Mammary epithelial cell (primary cell): ENCODE measurements at regions of chr15 and their contacts with region 1.

Region 1: GRCh38 chr15:99928429-99928981 is 195.3 kb upstream of the LYSMD4 start:
- DNase-seq: peak; percentile 65
- H3K4me3 ChIP-seq: peak overlapping the region; percentile 30 to 69 (median 60)
- H3K27ac ChIP-seq: no peak overlapping the region
- H3K4me1 ChIP-seq: peaks cover 14% of the 10 kb centered on the region
- H3K27me3 ChIP-seq: no peaks in the 10 kb centered on the region
- CTCF ChIP-seq: peak; percentile 24 to 66

Region 2: GRCh38 chr15:99878835-99879234 is 49.7 kb before region 1 on chr15:
- CTCF ChIA-PET with region 1: no interaction called
- dilution Hi-C with region 1: no loop called
- in situ Hi-C with region 1: no loop called
- intact Hi-C with region 1: no loop called
- DNase-seq: no peak
- H3K4me3 ChIP-seq: no peak overlapping the region
- H3K27ac ChIP-seq: no peak overlapping the region
- H3K4me1 ChIP-seq: no peaks in the 10 kb centered on the region
- H3K27me3 ChIP-seq: peaks cover 3% of the 10 kb centered on the region
- CTCF ChIP-seq: no peak

Region 3: GRCh38 chr15:99981191-99981647 is 52.7 kb after region 1 on chr15:
- CTCF ChIA-PET with region 1: no interaction called
- dilution Hi-C with region 1: no loop called
- in situ Hi-C with region 1: no loop called
- intact Hi-C with region 1: loop called (anchors 5 kb)
- DNase-seq: peak; percentile 14
- H3K4me3 ChIP-seq: no peak overlapping the region
- H3K27ac ChIP-seq: no peak overlapping the region
- H3K4me1 ChIP-seq: peaks cover 10% of the 10 kb centered on the region
- H3K27me3 ChIP-seq: peaks cover 5% of the 10 kb centered on the region
- CTCF ChIP-seq: peak; percentile 5 to 45

Region 4: DNA sequence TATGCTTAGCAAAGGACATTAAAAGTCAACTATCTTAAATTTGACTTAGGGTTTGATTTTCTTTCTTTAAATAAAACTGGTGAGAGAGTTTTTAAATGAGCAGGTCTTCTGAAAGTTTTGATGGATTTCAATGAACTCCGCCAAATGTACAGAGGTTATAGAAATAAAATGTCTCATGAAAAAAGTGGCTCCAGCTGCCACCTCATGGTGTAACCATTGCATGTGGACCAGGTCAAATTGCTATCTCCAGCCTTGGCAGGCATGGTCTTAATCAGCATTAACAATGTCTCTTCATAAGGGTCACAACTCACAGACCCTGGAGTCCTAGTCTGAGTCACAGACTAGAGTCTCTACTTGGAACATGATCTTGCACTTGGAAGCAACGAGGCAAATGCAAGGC is 230.9 kb after region 1 on chr15:
- CTCF ChIA-PET with region 1: no interaction called
- dilution Hi-C with region 1: no loop called
- in situ Hi-C with region 1: no loop called
- intact Hi-C with region 1: loop called (anchors 2 kb)
- DNase-seq: no peak
- H3K4me3 ChIP-seq: no peak overlapping the region
- H3K27ac ChIP-seq: no peak overlapping the region
- H3K4me1 ChIP-seq: no peaks in the 10 kb centered on the region
- H3K27me3 ChIP-seq: no peaks in the 10 kb centered on the region
- CTCF ChIP-seq: peak in 1 of 2 donors; percentile 10

Region 5: GRCh38 chr15:100192097-100193080 is 263.9 kb after region 1 on chr15:
- CTCF ChIA-PET with region 1: no interaction called
- dilution Hi-C with region 1: no loop called
- in situ Hi-C with region 1: no loop called
- intact Hi-C with region 1: loop called (anchors 1 kb)
- DNase-seq: no peak
- H3K4me3 ChIP-seq: no peak overlapping the region
- H3K27ac ChIP-seq: no peak overlapping the region
- H3K4me1 ChIP-seq: no peaks in the 10 kb centered on the region
- H3K27me3 ChIP-seq: no peaks in the 10 kb centered on the region
- CTCF ChIP-seq: no peak

Region 6: GRCh38 chr15:100383302-100384107 is 455.0 kb after region 1 on chr15:
- CTCF ChIA-PET with region 1: no interaction called
- dilution Hi-C with region 1: no loop called
- in situ Hi-C with region 1: no loop called
- intact Hi-C with region 1: loop called (anchors 2 kb)
- DNase-seq: peak; percentile 23
- H3K4me3 ChIP-seq: no peak overlapping the region
- H3K27ac ChIP-seq: no peak overlapping the region
- H3K4me1 ChIP-seq: no peaks in the 10 kb centered on the region
- H3K27me3 ChIP-seq: no peaks in the 10 kb centered on the region
- CTCF ChIP-seq: peak; percentile 34 to 56

Region 7: GRCh38 chr15:100602064-100602822 is 673.7 kb after region 1 on chr15 and contains the starts of genes ASB7 and LINS1:
- CTCF ChIA-PET with region 1: no interaction called
- dilution Hi-C with region 1: no loop called
- in situ Hi-C with region 1: no loop called
- intact Hi-C with region 1: loop called (anchors 10 kb)
- DNase-seq: peak; percentile 100
- H3K4me3 ChIP-seq: peak within 1 kb of the TSS; percentile 85 to 98 (median 97)
- H3K27ac ChIP-seq: peak within 1 kb of the TSS; percentile 93
- H3K4me1 ChIP-seq: peaks cover 14% of the 10 kb centered on the region
- H3K27me3 ChIP-seq: no peaks in the 10 kb centered on the region
- CTCF ChIP-seq: no peak
- total RNA-seq, gene ASB7: 15.4 to 20.7 TPM
- total RNA-seq, gene LINS1: 19.0 to 26.3 TPM